Activated CD4-positive, alpha-beta memory T cell treated with anti-CD3 and anti-CD28 coated beads for 36 hours (primary cell): ENCODE measurements at regions of chr11 and their contacts with region 1.

Region 1: DNA sequence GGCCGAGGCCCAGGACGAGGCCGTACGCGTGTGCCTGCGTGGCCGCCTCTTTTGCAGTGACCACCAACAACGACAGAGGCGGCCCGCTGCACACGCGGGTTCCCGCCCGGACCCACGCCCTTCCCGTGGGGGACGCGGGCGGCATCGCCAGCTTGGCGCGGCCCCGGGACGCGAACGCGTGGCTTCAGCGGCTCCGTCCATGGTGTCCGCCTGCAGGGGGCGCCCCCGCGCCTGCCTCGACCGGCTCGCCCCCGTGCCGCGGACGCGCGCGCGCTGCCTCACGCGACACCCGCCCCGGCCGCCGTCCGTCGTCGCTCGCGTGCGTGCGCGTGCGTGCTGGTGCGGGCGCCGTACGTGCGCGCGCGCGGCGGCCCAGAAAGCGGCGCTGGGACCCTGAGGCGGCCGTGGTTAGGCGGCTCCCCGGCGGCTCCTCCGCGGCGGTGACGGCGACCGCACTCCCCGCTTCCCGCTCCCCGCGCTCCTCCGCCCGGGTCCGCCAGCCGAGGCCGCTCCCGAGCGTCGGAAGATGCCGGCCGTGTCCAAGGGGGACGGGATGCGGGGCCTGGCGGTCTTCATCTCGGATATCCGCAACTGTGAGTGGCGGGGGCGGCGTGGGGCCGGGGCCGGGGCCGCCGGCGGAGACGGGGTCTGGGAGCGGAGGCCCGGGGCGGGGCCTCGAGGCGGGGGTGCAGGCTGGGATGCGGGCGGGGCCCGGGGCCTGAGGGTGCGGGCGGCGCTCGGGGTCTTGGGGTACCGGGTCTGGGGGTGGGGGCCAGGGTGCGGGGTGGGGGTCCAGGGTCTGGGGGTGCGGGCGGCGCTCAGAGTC is at the start of gene AP2A2:
- DNase-seq: peak; percentile 91
- H3K4me3 Mint-ChIP-seq: peak within 1 kb of the TSS; percentile 78
- H3K27ac Mint-ChIP-seq: peak within 1 kb of the TSS; percentile 75
- H3K4me1 Mint-ChIP-seq: peaks cover 29% of the 10 kb centered on the region
- H3K27me3 Mint-ChIP-seq: no peaks in the 10 kb centered on the region
- total RNA-seq, gene AP2A2: 42.8 to 44.1 TPM

Region 2: GRCh38 chr11:910589-911195 is 15.0 kb before region 1 on chr11 and contains the start of gene CHID1:
- CTCF ChIA-PET with region 1: interaction called, 16 read pairs
- POLR2A ChIA-PET with region 1: interaction called, 4 read pairs
- intact Hi-C with region 1: loop called (anchors 1 kb)
- DNase-seq: peak; percentile 92
- H3K4me3 Mint-ChIP-seq: peak within 1 kb of the TSS; percentile 89
- H3K27ac Mint-ChIP-seq: peak within 1 kb of the TSS; percentile 76
- H3K4me1 Mint-ChIP-seq: peaks cover 14% of the 10 kb centered on the region
- H3K27me3 Mint-ChIP-seq: no peaks in the 10 kb centered on the region
- total RNA-seq, gene CHID1: 61.5 to 61.6 TPM

Region 3: GRCh38 chr11:975827-976226 is 50.1 kb after region 1 on chr11:
- CTCF ChIA-PET with region 1: no interaction called
- POLR2A ChIA-PET with region 1: no interaction called
- intact Hi-C with region 1: no loop called
- DNase-seq: peak; percentile 25
- H3K4me3 Mint-ChIP-seq: no peak overlapping the region
- H3K27ac Mint-ChIP-seq: no peak overlapping the region
- H3K4me1 Mint-ChIP-seq: peaks cover 6% of the 10 kb centered on the region
- H3K27me3 Mint-ChIP-seq: no peaks in the 10 kb centered on the region